ENCODE measurements at regions of chr7 and their contacts with region 1.

Region 1: GRCh38 chr7:73851410-73852234 is 9.3 kb upstream of the METTL27 start:
- DNase-seq: no peak
- H3K4me3 ChIP-seq: no peak overlapping the region
- H3K27ac ChIP-seq: no peak overlapping the region
- H3K4me1 ChIP-seq: no peaks in the 10 kb centered on the region
- CTCF ChIP-seq: no peak

Region 2: DNA sequence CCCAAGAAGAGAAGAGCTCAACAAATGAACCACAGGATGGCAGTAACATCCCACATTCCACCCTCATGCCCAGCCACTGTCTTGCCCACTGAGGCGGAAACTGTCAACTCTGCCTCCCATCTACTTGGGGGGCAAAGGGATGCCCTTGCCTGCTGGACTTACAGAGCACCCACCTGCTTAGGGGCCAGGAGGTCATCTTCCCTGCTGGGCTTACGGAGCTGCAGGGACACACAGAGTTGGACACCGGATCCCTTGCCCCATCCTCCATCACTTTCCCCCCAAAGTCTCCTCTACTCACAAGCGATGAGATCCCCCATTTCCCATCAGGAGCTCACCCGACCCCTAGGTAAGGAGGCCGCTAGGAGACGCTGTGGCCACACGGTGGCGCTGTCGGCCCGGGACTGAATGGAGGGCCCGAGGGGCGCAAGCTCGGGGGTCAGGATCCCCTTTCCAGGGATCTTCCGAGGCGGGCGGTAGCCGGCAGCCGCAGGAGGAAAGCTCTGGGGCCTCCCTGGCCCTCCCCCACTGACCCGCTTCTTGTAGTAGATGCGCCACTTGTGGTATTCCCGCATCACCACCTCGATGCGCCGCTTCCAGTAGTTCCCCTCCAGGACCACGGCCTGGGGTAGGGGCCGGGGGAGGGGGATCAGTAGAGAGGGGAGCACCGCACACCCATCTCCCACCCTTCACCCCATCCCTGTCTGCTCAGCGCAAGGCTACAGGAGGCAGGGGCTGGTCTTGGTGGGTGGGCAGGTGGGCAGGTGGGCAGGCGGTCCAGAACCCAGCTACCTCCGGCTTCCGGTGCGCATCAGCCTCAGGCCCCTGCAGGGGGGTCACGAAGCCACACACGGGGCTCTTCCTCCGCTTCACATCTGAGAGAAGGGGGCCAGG is 244.6 kb before region 1 on chr7:
- CTCF ChIA-PET with region 1: no interaction called
- POLR2A ChIA-PET with region 1: no interaction called
- intact Hi-C with region 1: loop called (anchors 1 kb)
- DNase-seq: peak; percentile 74
- H3K4me3 ChIP-seq: no peak overlapping the region
- H3K27ac ChIP-seq: no peak overlapping the region
- H3K4me1 ChIP-seq: no peaks in the 10 kb centered on the region
- CTCF ChIP-seq: peak; percentile 96

Region 3: GRCh38 chr7:73811760-73812168 is 39.9 kb before region 1 on chr7:
- CTCF ChIA-PET with region 1: no interaction called
- POLR2A ChIA-PET with region 1: no interaction called
- intact Hi-C with region 1: loop called (anchors 1 kb)
- DNase-seq: peak; percentile 63
- H3K4me3 ChIP-seq: no peak overlapping the region
- H3K27ac ChIP-seq: no peak overlapping the region
- H3K4me1 ChIP-seq: no peaks in the 10 kb centered on the region
- CTCF ChIP-seq: peak; percentile 79